ENCODE measurements at regions of chr3 and their contacts with region 1.

Region 1: DNA sequence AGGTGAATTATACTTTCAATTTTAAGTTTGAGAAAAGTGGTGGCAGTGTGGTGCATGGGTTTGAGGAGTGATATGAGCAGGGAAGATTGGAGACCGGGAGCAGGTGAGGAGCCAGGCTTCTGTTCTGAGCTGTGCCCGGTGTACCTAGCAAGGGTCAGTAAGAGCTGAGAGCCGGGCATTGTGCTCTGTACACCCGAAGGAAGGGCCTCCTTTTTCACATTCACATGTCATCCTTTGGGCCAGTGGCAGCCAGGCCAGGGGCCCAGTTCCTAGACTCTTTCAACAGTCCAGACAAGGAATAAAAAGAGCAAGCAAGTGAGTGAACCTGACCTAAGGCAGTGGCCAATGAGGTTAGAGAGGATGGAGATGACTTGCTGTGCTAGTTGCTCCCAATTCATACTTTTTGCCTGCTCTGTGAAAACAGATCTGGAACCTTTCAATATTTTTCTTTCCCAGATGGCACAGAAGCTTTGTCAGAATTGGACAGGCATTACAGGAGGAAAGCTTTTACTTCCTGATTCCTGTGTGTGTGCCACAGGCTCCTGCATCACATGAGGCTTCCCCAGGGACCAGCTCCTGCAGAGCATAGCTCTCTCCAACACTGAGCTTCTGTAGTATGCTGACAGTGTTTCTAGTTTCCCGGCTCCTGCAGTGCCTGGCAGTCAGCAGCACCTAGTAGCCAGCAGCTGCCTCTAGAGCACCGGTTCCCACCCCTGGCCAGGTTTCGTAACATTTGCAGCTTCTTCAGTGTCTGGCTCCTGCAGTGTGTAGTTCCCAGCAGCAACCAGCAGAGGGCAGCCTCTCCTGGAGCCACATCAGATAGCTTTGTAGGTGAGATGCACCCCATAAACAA is 5.3 kb upstream of the TRA2B start:
- DNase-seq: peak; percentile 90
- ATAC-seq: peak; percentile 99
- H3K4me3 Mint-ChIP-seq: no peak overlapping the region
- H3K27ac Mint-ChIP-seq: peak overlapping the region; percentile 16; the same call in 1 of the 2 replicates
- H3K4me1 Mint-ChIP-seq: peaks cover 7% of the 10 kb centered on the region
- H3K27me3 Mint-ChIP-seq: peaks cover 11% of the 10 kb centered on the region
- CTCF ChIP-seq: peak; percentile 98

Region 2: GRCh38 chr3:185781759-185782158 is 161.4 kb before region 1 on chr3:
- CTCF ChIA-PET with region 1: no interaction called
- POLR2A ChIA-PET with region 1: no interaction called
- DNase-seq: no peak
- ATAC-seq: no peak
- H3K4me3 Mint-ChIP-seq: no peak overlapping the region
- H3K27ac Mint-ChIP-seq: peak overlapping the region; percentile 62; the same call in 1 of the 2 replicates
- H3K4me1 Mint-ChIP-seq: peaks cover 92% of the 10 kb centered on the region
- H3K27me3 Mint-ChIP-seq: no peaks in the 10 kb centered on the region
- CTCF ChIP-seq: no peak

Region 3: DNA sequence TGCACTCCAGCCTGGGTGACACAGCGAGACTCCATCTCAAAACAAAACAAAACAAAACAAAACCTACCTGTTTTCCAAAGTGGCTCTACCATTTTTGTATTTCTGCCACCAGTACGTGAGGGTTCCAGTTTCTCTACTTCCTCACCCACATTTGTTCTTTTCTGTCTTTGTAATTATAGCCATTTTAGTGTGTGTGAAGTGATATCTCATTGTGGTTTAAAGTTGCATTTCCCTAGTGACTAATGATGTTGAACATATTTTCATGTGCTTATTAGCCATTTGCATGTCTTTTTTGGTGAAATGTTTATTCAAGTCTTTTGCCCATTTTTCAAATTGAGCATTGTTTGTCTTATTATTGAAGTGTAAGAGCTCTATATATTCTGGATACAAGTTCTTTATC is 56.1 kb before region 1 on chr3:
- CTCF ChIA-PET with region 1: no interaction called
- POLR2A ChIA-PET with region 1: no interaction called
- DNase-seq: no peak
- ATAC-seq: no peak
- H3K4me3 Mint-ChIP-seq: no peak overlapping the region
- H3K27ac Mint-ChIP-seq: no peak overlapping the region
- H3K4me1 Mint-ChIP-seq: no peaks in the 10 kb centered on the region
- H3K27me3 Mint-ChIP-seq: no peaks in the 10 kb centered on the region
- CTCF ChIP-seq: no peak

Region 4: DNA sequence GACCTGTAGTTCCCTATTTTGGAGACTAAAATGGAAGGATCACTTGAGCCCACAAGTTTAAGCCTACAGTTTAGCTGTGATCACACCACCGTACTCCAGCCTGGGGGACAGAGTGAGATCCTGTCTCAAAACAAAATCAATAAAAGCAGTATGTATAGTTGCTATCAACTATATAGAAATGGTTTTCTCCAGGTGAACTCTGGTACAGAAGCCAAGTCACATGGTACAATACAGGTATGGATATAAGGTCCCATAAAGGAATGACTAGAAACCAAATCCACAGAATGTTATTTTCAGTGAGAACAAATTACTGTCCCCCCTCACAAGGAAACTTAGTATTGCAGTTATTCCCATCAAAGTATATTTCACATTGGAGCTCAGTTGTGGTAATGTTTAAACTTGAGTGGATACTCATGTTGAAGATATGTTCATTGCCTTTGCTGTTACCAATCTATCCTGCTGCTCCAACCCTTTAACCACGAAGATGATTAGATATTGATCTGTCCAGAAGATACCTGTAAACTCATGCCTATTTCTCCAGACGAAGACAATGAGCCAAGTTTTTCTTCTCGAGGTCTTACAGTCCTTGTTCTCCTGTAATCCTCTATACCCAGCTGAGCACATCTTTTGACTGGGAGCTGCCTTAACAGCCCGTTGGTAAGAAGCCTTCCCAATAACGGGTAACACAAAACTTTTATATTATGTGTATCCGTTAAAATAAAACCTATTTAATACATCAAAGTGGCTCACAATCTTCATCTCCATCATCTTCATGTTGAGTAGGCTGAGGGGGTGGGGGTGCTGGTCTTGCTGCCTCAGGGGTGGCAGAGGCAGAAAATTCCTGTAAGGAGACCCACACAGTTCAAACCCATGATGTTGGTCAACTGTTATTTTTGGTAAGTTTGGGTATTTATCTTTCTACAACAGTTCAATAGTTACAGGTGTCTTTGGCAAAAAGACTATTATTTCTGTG is 29.9 kb before region 1 on chr3:
- CTCF ChIA-PET with region 1: interaction called, 11 read pairs
- POLR2A ChIA-PET with region 1: interaction called, 4 read pairs
- DNase-seq: no peak
- ATAC-seq: peak; percentile 6
- H3K4me3 Mint-ChIP-seq: no peak overlapping the region
- H3K27ac Mint-ChIP-seq: peak overlapping the region; percentile 73; the same call in 1 of the 2 replicates
- H3K4me1 Mint-ChIP-seq: no peaks in the 10 kb centered on the region
- H3K27me3 Mint-ChIP-seq: no peaks in the 10 kb centered on the region
- CTCF ChIP-seq: no peak

Region 5: DNA sequence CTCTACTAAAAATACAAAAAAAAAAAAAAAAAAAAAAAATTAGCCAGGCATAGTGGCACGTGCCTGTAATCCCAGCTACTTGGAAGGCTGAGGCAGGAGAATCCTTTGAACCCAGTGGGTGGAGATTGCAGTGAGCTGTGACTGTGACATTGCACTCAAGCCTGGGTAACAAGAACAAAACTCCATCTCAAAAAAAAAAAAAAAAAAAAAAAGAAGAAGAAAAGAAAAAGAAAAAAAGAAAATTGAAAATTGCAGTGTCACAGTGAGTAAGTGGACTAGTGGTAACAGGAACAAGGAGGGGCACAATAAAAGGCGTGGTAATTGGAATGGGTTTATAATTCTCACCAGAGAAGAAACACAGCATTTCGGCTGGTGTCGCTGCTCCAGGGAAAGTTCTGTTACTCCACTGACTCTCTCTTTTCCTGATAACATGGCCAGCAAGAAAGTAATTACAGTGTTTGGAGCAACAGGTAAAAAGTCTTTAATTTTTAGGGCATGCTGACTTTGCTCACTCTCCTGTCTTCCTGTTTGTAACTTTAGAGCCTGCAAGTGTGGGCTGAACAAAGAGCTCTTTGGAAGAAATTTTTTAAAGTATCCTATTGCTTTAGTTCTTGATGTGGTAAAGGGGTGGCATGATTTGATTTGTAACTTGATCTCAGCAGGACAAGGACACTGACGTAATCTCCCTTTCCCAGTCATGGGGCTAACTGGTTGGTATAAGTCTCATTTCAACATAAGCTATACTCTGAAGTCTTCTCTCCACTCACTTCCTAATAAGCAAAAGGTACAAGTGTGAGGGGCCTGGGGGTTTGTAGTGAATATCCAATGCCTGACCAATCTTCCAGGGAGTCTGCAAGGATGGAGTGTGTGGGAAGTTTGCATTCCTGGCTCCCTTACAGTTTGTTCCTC is 16.7 kb after region 1 on chr3:
- CTCF ChIA-PET with region 1: interaction called, 113 read pairs
- POLR2A ChIA-PET with region 1: no interaction called
- DNase-seq: no peak
- ATAC-seq: no peak
- H3K4me3 Mint-ChIP-seq: no peak overlapping the region
- H3K27ac Mint-ChIP-seq: no peak overlapping the region
- H3K4me1 Mint-ChIP-seq: no peaks in the 10 kb centered on the region
- H3K27me3 Mint-ChIP-seq: no peaks in the 10 kb centered on the region
- CTCF ChIP-seq: no peak

Region 6: DNA sequence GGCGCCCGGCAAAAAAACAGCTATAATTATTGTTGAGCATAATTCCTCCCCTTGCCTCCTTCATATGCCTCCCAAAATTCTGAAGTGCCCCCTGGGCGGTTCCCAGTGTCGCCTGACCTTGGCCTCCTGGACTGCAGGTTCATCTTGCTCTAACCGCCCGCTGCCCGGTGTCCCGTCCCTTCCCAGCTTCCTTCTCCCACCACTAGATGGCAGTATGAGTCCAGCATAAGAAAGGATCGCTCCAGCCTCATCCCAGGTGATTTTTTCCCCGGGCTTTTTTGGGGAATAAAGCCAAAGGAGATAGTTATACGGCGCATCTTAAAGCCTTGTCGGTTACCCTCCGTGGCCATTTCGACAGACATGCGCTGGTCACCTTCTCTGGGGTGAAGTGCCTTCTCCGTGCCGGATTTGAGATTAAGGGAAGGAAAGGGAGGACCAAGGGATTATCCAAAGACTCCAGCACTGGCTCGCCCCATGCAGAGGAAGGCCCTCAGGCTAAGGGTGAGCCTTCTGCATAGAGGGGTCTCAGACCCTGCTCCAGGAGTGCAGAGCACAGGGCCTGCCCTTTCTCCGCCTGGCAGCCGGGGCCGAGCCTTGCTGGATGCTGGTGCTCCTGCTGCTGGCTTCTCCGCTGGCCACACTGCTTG is 40.5 kb after region 1 on chr3:
- CTCF ChIA-PET with region 1: interaction called, 56 read pairs
- POLR2A ChIA-PET with region 1: no interaction called
- DNase-seq: peak; percentile 82
- ATAC-seq: peak; percentile 89
- H3K4me3 Mint-ChIP-seq: peak overlapping the region; percentile 55
- H3K27ac Mint-ChIP-seq: no peak overlapping the region
- H3K4me1 Mint-ChIP-seq: peaks cover 3% of the 10 kb centered on the region; the same call in 1 of the 2 replicates
- H3K27me3 Mint-ChIP-seq: peaks cover 10% of the 10 kb centered on the region; the same call in 1 of the 2 replicates
- CTCF ChIP-seq: peak; percentile 88

Region 7: DNA sequence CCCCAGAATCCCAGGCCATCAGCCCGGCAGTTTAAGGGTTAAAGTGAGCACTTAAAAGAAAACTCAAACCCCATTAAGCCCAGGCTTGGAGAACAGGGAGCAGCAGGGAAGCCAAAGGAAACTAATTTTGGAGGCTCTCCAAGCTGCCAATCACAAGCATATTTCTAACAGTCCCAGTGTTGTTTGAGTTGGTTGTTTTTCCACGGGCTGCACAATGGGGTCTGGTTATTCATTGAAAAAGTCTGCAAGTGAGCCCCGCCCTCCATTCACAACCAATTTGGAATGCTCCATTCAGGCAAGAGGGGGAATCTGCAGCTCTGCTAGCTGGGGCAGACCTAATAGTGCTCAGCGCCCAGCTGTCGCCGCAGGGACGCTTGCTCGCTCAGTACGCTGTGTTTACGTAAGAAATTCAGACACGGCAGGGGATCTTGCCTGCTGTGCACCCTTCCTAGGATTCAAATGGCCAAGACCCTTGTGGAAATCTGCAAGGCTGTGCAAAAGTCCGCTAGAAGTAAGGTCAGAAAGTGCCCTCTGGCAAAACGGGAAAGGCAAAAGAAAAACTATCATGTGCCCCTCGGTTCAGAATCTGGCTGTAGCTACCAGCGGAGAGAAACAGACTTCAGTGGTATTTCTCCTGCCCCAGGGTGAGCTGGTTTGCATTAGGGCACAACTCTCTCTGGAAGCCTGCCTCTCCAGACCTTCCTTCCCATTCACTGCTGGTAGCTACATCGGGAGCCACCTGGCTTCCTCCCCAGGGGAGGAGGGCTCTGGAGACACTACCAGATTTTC is 154.7 kb after region 1 on chr3:
- CTCF ChIA-PET with region 1: interaction called, 15 read pairs
- POLR2A ChIA-PET with region 1: no interaction called
- DNase-seq: peak; percentile 80
- ATAC-seq: peak; percentile 82
- H3K4me3 Mint-ChIP-seq: peak overlapping the region; percentile 82
- H3K27ac Mint-ChIP-seq: peak overlapping the region; percentile 98
- H3K4me1 Mint-ChIP-seq: peaks cover 82% of the 10 kb centered on the region
- H3K27me3 Mint-ChIP-seq: no peaks in the 10 kb centered on the region
- CTCF ChIP-seq: no peak

Region 8: GRCh38 chr3:186259612-186260383 is 316.7 kb after region 1 on chr3:
- CTCF ChIA-PET with region 1: interaction called, 19 read pairs
- POLR2A ChIA-PET with region 1: no interaction called
- DNase-seq: peak; percentile 91
- ATAC-seq: peak; percentile 98
- H3K4me3 Mint-ChIP-seq: peak overlapping the region; percentile 41; the same call in 1 of the 2 replicates
- H3K27ac Mint-ChIP-seq: peak overlapping the region; percentile 32; the same call in 1 of the 2 replicates
- H3K4me1 Mint-ChIP-seq: peaks cover 27% of the 10 kb centered on the region
- H3K27me3 Mint-ChIP-seq: no peaks in the 10 kb centered on the region; the same call in 1 of the 2 replicates
- CTCF ChIP-seq: no peak; the same call in 1 of the 2 replicates

Measured in WTC11 (cell line).